BJ (cell line): ENCODE measurements at regions of chr20 and their contacts with region 1.

Region 1: GRCh38 chr20:35741892-35742740 is at the start of gene RBM39:
- DNase-seq: peak; percentile 99
- H3K4me3 ChIP-seq: peak within 1 kb of the TSS; percentile 77
- H3K27me3 ChIP-seq: no peaks in the 10 kb centered on the region
- CTCF ChIP-seq: peak; percentile 60
- polyA plus RNA-seq, gene RBM39: 63.5 and 107 TPM in 2 replicates

Region 2: GRCh38 chr20:35726759-35727711 is 15.1 kb before region 1 on chr20:
- CTCF ChIA-PET with region 1: interaction called, 10 read pairs
- POLR2A ChIA-PET with region 1: interaction called, 4 read pairs
- DNase-seq: no peak
- H3K4me3 ChIP-seq: no peak overlapping the region
- H3K27me3 ChIP-seq: no peaks in the 10 kb centered on the region
- CTCF ChIP-seq: no peak

Region 3: DNA sequence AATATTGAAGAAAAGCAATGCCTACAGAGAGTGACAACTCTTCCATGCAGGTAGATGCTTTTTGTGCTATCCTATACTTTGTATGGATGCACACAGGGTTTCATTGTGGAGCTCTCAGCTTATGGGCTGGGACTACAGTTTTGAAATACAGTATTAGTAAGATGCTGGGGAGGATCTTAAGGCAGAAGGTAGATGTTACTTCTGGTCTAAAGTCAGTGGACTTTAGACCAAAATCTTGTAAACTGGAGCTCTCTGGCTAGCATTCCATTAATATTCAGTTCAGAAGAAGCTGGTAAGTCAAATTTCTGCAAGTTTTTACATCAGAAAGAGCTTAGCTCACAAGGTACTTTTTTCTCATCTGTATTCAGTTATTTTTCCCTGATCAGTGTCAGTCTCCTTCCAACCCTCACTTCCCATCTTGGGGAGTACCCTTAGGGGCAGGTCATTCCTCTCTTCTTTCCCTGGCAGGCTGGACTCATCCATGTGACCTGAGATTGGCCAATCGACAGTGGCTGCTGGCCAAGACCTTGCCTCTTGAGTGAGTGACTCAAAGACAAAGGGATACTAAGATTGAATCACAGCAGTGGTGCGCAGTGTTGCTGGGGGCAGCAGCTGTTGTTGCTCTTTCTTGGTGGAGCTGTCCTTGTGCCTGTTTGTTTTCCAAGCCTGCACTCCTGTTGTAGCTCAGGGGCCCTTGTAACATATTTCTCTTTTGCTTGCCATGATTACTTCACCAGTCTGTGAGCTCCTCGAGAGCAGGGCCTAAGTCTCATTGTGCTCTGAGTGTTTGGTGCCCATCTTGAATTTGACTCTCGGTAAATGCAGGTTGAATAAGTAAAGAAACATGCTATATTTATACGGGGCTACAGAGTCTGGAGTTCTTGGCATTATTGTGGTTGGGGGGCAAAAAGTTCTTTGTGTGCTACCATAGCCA is 26.9 kb after region 1 on chr20:
- CTCF ChIA-PET with region 1: interaction called, 5 read pairs
- POLR2A ChIA-PET with region 1: interaction called, 21 read pairs
- DNase-seq: peak; percentile 92
- H3K4me3 ChIP-seq: no peak overlapping the region
- H3K27me3 ChIP-seq: no peaks in the 10 kb centered on the region
- CTCF ChIP-seq: no peak

Region 4: GRCh38 chr20:35883778-35884540 is 141.8 kb after region 1 on chr20:
- CTCF ChIA-PET with region 1: interaction called, 8 read pairs
- POLR2A ChIA-PET with region 1: interaction called, 13 read pairs
- DNase-seq: peak; percentile 99
- H3K4me3 ChIP-seq: peak overlapping the region; percentile 15
- H3K27me3 ChIP-seq: no peaks in the 10 kb centered on the region
- CTCF ChIP-seq: peak; percentile 61

Region 5: GRCh38 chr20:35929286-35929685 is 187.2 kb after region 1 on chr20:
- CTCF ChIA-PET with region 1: no interaction called
- POLR2A ChIA-PET with region 1: interaction called, 15 read pairs
- DNase-seq: no peak
- H3K4me3 ChIP-seq: no peak overlapping the region
- H3K27me3 ChIP-seq: no peaks in the 10 kb centered on the region
- CTCF ChIP-seq: no peak

Region 6: GRCh38 chr20:36010825-36011224 is 268.7 kb after region 1 on chr20:
- CTCF ChIA-PET with region 1: no interaction called
- POLR2A ChIA-PET with region 1: no interaction called
- DNase-seq: no peak
- H3K4me3 ChIP-seq: no peak overlapping the region
- H3K27me3 ChIP-seq: no peaks in the 10 kb centered on the region
- CTCF ChIP-seq: no peak

Region 7: DNA sequence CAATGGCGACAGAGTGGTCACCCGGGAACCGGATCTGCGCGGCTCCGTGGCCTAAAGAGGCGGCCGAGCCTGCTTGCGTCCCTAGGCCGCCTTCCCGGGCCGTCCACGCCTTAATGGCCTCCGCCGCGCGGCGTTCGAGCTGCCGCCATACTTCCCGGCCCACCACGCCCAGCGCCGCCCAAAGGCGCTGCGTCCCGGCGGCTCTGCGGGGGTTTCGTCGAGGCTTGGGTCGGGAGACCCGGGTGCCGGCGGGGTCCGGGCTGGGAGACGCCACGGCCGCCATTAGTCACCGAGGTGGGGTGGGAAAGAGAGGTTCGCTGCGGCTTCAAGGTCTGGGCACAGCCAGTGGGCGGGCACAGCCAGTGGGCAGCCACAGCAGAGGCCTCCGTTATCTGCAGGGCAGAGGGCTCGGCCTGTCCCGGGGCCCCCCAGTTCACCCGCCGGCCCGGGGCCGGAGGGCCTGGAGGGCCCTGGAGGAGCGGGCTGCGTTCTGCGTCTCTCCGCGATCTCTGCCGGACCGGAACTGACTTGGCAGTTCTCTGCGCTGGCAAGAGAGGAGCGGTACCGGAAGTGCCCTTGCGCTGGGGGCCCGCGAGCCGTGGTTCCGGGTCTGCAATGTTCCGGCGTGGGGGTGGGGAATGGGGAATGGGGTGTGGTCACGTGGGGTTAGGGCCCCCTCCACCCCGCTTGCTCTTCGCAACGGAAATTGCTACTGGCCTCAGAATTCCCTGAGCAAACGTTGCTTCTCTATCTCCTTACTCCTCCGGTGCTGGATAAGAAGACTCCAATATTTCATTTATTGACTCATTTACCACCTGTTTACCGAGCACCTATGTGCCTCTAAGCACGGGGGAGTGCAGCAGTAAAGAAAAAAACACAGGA is 308.6 kb after region 1 on chr20:
- CTCF ChIA-PET with region 1: no interaction called
- POLR2A ChIA-PET with region 1: no interaction called
- DNase-seq: peak; percentile 19
- H3K4me3 ChIP-seq: peak overlapping the region; percentile 70
- H3K27me3 ChIP-seq: peaks cover 4% of the 10 kb centered on the region; the same call in 1 of the 2 replicates
- CTCF ChIP-seq: no peak